Heart left ventricle (tissue), 16 donors: ENCODE measurements at regions of chr11 and their contacts with region 1.

Region 1: GRCh38 chr11:121194731-121195596 is 93.9 kb downstream of the TECTA start:
- DNase-seq: peak in 2 of 5 donors; percentile 29 to 40
- ATAC-seq: peak; percentile 55 to 81 (median 78)
- H3K4me3 ChIP-seq: no peak overlapping the region
- H3K27ac ChIP-seq: no peak overlapping the region
- H3K4me1 ChIP-seq: peaks cover 0 to 17% (median 0%) of the 10 kb centered on the region in 12 donors
- H3K27me3 ChIP-seq: peaks cover 0 to 20% (median 0%) of the 10 kb centered on the region in 9 donors
- CTCF ChIP-seq: peak; percentile 72 to 88 (median 83)
- POLR2A ChIP-seq: no peak

Region 2: GRCh38 chr11:120511116-120511819 is 683.7 kb before region 1 on chr11 and contains the start of gene GRIK4:
- intact Hi-C with region 1: loop called (anchors 2 to 10 kb)
- DNase-seq: peak; percentile 77 to 91 (median 83)
- ATAC-seq: peak; percentile 53 to 94 (median 90)
- H3K4me3 ChIP-seq: peak within 1 kb of the TSS in 11 of 12 donors; percentile 18 to 62 (median 51)
- H3K27ac ChIP-seq: no peak within 1 kb of the TSS
- H3K4me1 ChIP-seq: peaks cover 0 to 7% (median 0%) of the 10 kb centered on the region in 12 donors
- H3K27me3 ChIP-seq: peaks cover 3 to 54% (median 12%) of the 10 kb centered on the region in 9 donors
- CTCF ChIP-seq: peak; percentile 88 to 95 (median 93)
- POLR2A ChIP-seq: no peak
- total RNA-seq, gene GRIK4: 0.07 to 0.45 (median 0.13) TPM in 4 of 9 donors, not detected in the others

Region 3: GRCh38 chr11:120660024-120660565 is 534.9 kb before region 1 on chr11:
- intact Hi-C with region 1: loop called in 1 of 10 experiments (anchors 10 kb)
- DNase-seq: no peak
- ATAC-seq: peak in 1 of 4 donors; percentile 31
- H3K4me3 ChIP-seq: no peak overlapping the region
- H3K27ac ChIP-seq: no peak overlapping the region
- H3K4me1 ChIP-seq: no peaks in the 10 kb centered on the region
- H3K27me3 ChIP-seq: peaks cover 0 to 32% (median 4%) of the 10 kb centered on the region in 9 donors
- CTCF ChIP-seq: peak in 11 of 12 donors; percentile 17 to 42 (median 33)
- POLR2A ChIP-seq: no peak

Region 4: GRCh38 chr11:120801801-120802689 is 392.9 kb before region 1 on chr11:
- intact Hi-C with region 1: no loop called
- DNase-seq: peak; percentile 42 to 66 (median 44)
- ATAC-seq: peak in 2 of 4 donors; percentile 59
- H3K4me3 ChIP-seq: no peak overlapping the region
- H3K27ac ChIP-seq: no peak overlapping the region
- H3K4me1 ChIP-seq: no peaks in the 10 kb centered on the region
- H3K27me3 ChIP-seq: peaks cover 0 to 22% (median 0%) of the 10 kb centered on the region in 9 donors
- CTCF ChIP-seq: peak; percentile 71 to 93 (median 87)
- POLR2A ChIP-seq: no peak

Region 5: DNA sequence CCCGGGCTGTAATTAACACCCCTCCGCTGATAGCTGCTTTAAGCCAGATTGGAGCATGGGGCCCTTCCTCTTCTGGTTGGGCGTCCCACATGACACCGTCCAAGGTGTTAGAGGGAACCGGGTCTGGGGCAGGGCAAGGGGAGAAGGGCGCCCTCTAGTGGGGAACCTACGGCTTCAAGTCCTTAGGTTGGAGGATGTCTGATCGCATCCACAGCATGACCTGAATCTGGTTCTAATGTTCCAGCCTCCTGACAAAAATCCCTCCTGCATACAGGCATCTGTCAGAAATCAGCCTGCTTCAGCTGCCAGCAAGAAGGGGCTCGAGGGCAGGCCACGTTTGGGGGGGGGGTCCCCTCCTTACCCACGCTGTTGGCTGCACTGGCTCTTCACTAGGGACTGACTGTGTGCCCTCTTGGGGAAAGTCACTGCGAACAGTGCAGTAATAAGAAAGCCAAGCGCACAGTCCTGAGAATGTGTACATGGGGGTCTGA is 265.3 kb before region 1 on chr11:
- intact Hi-C with region 1: loop called in 5 of 10 experiments (anchors 2 to 10 kb)
- DNase-seq: peak in 3 of 5 donors; percentile 22 to 44 (median 39)
- ATAC-seq: peak in 3 of 4 donors; percentile 69 to 75 (median 72)
- H3K4me3 ChIP-seq: no peak overlapping the region
- H3K27ac ChIP-seq: no peak overlapping the region
- H3K4me1 ChIP-seq: no peaks in the 10 kb centered on the region
- H3K27me3 ChIP-seq: peaks cover 0 to 13% (median 0%) of the 10 kb centered on the region in 9 donors
- CTCF ChIP-seq: peak in 11 of 12 donors; percentile 28 to 66 (median 49)
- POLR2A ChIP-seq: no peak

Region 6: GRCh38 chr11:120936356-120936755 is 258.6 kb before region 1 on chr11:
- intact Hi-C with region 1: loop called in 6 of 10 experiments (anchors 2 to 10 kb)
- DNase-seq: no peak
- ATAC-seq: no peak
- H3K4me3 ChIP-seq: no peak overlapping the region
- H3K27ac ChIP-seq: no peak overlapping the region
- H3K4me1 ChIP-seq: no peaks in the 10 kb centered on the region
- H3K27me3 ChIP-seq: peaks cover 0 to 37% (median 0%) of the 10 kb centered on the region in 9 donors
- CTCF ChIP-seq: no peak
- POLR2A ChIP-seq: no peak

Region 7: GRCh38 chr11:120952461-120953434 is 242.2 kb before region 1 on chr11:
- intact Hi-C with region 1: loop called in 1 of 10 experiments (anchors 10 kb)
- DNase-seq: peak; percentile 70 to 89 (median 72)
- ATAC-seq: peak; percentile 75 to 96 (median 92)
- H3K4me3 ChIP-seq: peak overlapping the region in 6 of 12 donors; percentile 9 to 38 (median 26)
- H3K27ac ChIP-seq: peak overlapping the region in 3 of 12 donors; percentile 28 to 39 (median 38)
- H3K4me1 ChIP-seq: peaks cover 0 to 12% (median 3%) of the 10 kb centered on the region in 12 donors
- H3K27me3 ChIP-seq: peaks cover 0 to 20% (median 3%) of the 10 kb centered on the region in 9 donors
- CTCF ChIP-seq: peak; percentile 47 to 81 (median 68)
- POLR2A ChIP-seq: no peak